Activated CD8-positive, alpha-beta T cell treated with anti-CD3 and anti-CD28 coated beads for 36 hours (primary cell): ENCODE measurements at regions of chr1 and their contacts with region 1.

Region 1: GRCh38 chr1:174999216-174999925 is 376 bp upstream of the CACYBP start:
- DNase-seq: peak; percentile 97
- ATAC-seq: peak; percentile 81
- H3K4me3 Mint-ChIP-seq: no peak overlapping the region
- H3K27ac Mint-ChIP-seq: no peak overlapping the region
- H3K4me1 Mint-ChIP-seq: peaks cover 43% of the 10 kb centered on the region
- H3K27me3 Mint-ChIP-seq: no peaks in the 10 kb centered on the region
- CTCF ChIP-seq: no peak

Region 2: GRCh38 chr1:173867753-173868265 is 1131.6 kb before region 1 on chr1 and contains the start of gene GAS5:
- CTCF ChIA-PET with region 1: no interaction called
- POLR2A ChIA-PET with region 1: no interaction called
- intact Hi-C with region 1: loop called (anchors 5 kb)
- DNase-seq: peak; percentile 100
- ATAC-seq: peak; percentile 80
- H3K4me3 Mint-ChIP-seq: peak within 1 kb of the TSS; percentile 95
- H3K27ac Mint-ChIP-seq: peak within 1 kb of the TSS; percentile 97
- H3K4me1 Mint-ChIP-seq: peaks cover 52% of the 10 kb centered on the region
- H3K27me3 Mint-ChIP-seq: no peaks in the 10 kb centered on the region
- CTCF ChIP-seq: no peak
- total RNA-seq, gene GAS5: 1,276 to 1,298 TPM

Region 3: GRCh38 chr1:174800216-174800851 is 199.0 kb before region 1 on chr1:
- CTCF ChIA-PET with region 1: interaction called, 11 read pairs
- POLR2A ChIA-PET with region 1: interaction called, 12 read pairs
- intact Hi-C with region 1: no loop called
- DNase-seq: peak; percentile 19
- ATAC-seq: no peak
- H3K4me3 Mint-ChIP-seq: no peak overlapping the region
- H3K27ac Mint-ChIP-seq: no peak overlapping the region
- H3K4me1 Mint-ChIP-seq: peaks cover 14% of the 10 kb centered on the region
- H3K27me3 Mint-ChIP-seq: no peaks in the 10 kb centered on the region
- CTCF ChIP-seq: no peak

Region 4: GRCh38 chr1:174969977-174970376 is 29.4 kb before region 1 on chr1:
- CTCF ChIA-PET with region 1: interaction called, 11 read pairs
- POLR2A ChIA-PET with region 1: interaction called, 4 read pairs
- intact Hi-C with region 1: loop called (anchors 2 kb)
- DNase-seq: peak; percentile 76
- ATAC-seq: peak; percentile 60
- H3K4me3 Mint-ChIP-seq: peak overlapping the region; percentile 40
- H3K27ac Mint-ChIP-seq: peak overlapping the region; percentile 81
- H3K4me1 Mint-ChIP-seq: peaks cover 59% of the 10 kb centered on the region
- H3K27me3 Mint-ChIP-seq: peaks cover 1% of the 10 kb centered on the region
- CTCF ChIP-seq: no peak

Region 5: GRCh38 chr1:174982971-174983689 is 16.2 kb before region 1 on chr1:
- CTCF ChIA-PET with region 1: interaction called, 16 read pairs
- POLR2A ChIA-PET with region 1: interaction called, 13 read pairs
- intact Hi-C with region 1: no loop called
- DNase-seq: peak; percentile 52
- ATAC-seq: peak; percentile 13
- H3K4me3 Mint-ChIP-seq: no peak overlapping the region
- H3K27ac Mint-ChIP-seq: no peak overlapping the region
- H3K4me1 Mint-ChIP-seq: peaks cover 25% of the 10 kb centered on the region
- H3K27me3 Mint-ChIP-seq: no peaks in the 10 kb centered on the region
- CTCF ChIP-seq: peak; percentile 71